Ascending aorta (tissue), 2 donors: ENCODE measurements at regions of chr13 and their contacts with region 1.

Region 1: DNA sequence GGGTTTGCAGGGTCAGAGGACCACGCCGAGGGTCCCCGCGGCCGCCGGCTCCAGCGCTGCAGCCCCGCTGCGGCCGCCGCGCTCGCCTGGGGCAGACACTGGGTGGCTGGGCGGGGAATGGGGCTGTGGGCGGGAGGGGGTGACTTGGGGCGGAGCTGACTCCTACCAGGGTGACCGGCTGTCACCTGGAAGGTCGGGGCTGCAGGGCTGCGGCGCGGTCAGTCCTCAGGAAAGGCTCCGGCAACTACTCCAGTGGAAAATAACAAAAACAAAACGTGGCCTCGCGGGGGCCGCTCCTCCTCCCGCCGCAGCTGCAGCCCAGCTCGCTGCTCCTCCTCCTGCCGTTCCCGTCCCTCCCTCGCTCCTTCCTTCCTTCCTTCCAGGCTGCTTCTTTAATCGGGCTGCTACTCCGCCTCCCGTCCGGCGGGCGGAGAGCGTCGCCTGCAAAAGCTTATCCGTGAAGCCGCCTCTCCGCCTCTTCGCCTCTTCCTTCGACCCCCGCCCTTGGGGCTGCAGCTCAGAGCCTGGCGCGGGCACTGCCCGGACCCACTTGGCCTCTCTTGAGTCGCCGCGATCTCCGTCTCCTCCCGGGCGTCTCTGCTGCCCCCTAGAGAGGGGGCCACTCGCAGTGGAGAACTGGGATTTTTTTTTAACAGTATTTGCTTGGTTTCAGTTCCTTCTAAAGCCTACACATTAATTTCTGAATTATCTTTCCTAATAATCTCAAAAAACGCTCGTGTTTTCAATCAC is at the start of gene TBC1D4:
- DNase-seq: peak; percentile 28 to 92
- H3K4me3 ChIP-seq: peak within 1 kb of the TSS; percentile 91 to 95
- H3K27ac ChIP-seq: peak within 1 kb of the TSS; percentile 56 to 62
- H3K4me1 ChIP-seq: no peaks in the 10 kb centered on the region
- H3K27me3 ChIP-seq: no peaks in the 10 kb centered on the region
- CTCF ChIP-seq: peak; percentile 59 to 90 (median 81)
- total RNA-seq, gene TBC1D4: 9.5 TPM

Region 2: DNA sequence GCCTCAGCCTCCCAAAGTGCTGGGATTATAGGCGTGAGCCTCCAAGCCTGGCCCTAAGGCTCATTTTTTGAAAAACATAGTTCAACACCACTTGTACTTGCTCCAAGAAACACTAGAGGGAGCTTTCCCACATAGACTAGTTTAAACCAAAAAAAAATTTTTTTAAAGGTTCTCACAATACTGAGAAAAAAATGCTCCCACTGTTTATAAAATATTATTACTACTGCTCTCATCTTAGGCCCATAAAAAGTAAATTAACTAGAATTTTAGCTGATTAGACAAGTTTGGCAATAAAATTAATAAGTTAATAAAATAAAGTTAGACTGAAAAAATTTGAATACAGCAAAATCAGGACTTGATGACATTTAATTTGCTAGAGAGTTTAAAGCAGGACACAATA is 109.7 kb before region 1 on chr13:
- intact Hi-C with region 1: loop called (anchors 1 kb)
- DNase-seq: no peak
- H3K4me3 ChIP-seq: no peak overlapping the region
- H3K27ac ChIP-seq: no peak overlapping the region
- H3K4me1 ChIP-seq: no peaks in the 10 kb centered on the region
- H3K27me3 ChIP-seq: no peaks in the 10 kb centered on the region
- CTCF ChIP-seq: peak; percentile 49 to 73 (median 72)

Region 3: GRCh38 chr13:75405976-75406703 is 76.1 kb before region 1 on chr13:
- intact Hi-C with region 1: no loop called
- DNase-seq: no peak
- H3K4me3 ChIP-seq: no peak overlapping the region
- H3K27ac ChIP-seq: no peak overlapping the region
- H3K4me1 ChIP-seq: no peaks in the 10 kb centered on the region
- H3K27me3 ChIP-seq: no peaks in the 10 kb centered on the region
- CTCF ChIP-seq: no peak

Region 4: DNA sequence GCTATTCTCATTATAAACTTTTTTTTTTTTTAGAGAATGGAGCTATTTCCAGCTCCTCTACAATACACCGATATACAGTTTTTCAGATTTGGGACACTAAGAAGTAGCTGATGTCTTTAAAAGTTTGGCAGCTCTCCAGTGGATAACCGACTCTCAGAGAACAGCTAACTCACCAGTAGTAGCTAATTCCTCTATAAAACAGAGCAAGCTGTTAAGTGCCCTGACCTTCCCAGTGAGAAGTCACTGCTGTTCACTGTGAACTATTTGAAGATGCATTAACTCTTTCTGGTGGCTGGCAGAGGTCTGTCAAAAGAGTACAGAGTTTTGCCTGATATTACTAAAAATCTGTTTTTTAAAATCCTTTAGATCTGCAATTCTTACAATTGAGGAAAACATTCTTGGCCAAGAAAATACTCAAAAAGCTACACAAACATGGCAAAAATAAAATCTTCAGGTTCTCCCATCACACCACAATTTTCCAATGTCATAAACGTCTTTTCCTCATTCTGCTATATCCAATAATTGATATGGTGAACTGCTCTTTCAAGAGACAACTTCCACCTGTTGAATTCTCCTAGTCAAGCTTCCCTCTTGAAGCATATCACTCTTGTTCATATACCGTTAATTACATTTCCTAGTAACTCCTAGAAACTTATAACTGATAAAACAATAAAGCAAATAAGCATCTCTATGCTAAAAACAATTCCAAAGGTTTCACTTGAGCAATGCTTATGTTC is 44.5 kb before region 1 on chr13:
- intact Hi-C with region 1: no loop called
- DNase-seq: no peak
- H3K4me3 ChIP-seq: no peak overlapping the region
- H3K27ac ChIP-seq: no peak overlapping the region
- H3K4me1 ChIP-seq: no peaks in the 10 kb centered on the region
- H3K27me3 ChIP-seq: no peaks in the 10 kb centered on the region
- CTCF ChIP-seq: no peak

Region 5: GRCh38 chr13:75537401-75538365 is 55.4 kb after region 1 on chr13 and contains the start of gene COMMD6:
- intact Hi-C with region 1: loop called (anchors 2 kb)
- DNase-seq: peak in 1 of 2 donors; percentile 87
- H3K4me3 ChIP-seq: peak within 1 kb of the TSS; percentile 88 to 99
- H3K27ac ChIP-seq: peak within 1 kb of the TSS; percentile 79 to 85
- H3K4me1 ChIP-seq: peaks cover 6% of the 10 kb centered on the region in 2 donors
- H3K27me3 ChIP-seq: no peaks in the 10 kb centered on the region
- CTCF ChIP-seq: peak; percentile 45 to 61 (median 58)
- total RNA-seq, gene COMMD6: 36.2 TPM

Region 6: GRCh38 chr13:75621147-75621546 is 138.9 kb after region 1 on chr13:
- intact Hi-C with region 1: no loop called
- DNase-seq: no peak
- H3K4me3 ChIP-seq: no peak overlapping the region
- H3K27ac ChIP-seq: no peak overlapping the region
- H3K4me1 ChIP-seq: no peaks in the 10 kb centered on the region
- H3K27me3 ChIP-seq: no peaks in the 10 kb centered on the region
- CTCF ChIP-seq: no peak

Region 7: GRCh38 chr13:75828851-75829250 is 346.6 kb after region 1 on chr13:
- intact Hi-C with region 1: no loop called
- DNase-seq: no peak
- H3K4me3 ChIP-seq: no peak overlapping the region
- H3K27ac ChIP-seq: no peak overlapping the region
- H3K4me1 ChIP-seq: no peaks in the 10 kb centered on the region
- H3K27me3 ChIP-seq: no peaks in the 10 kb centered on the region
- CTCF ChIP-seq: no peak